Aorta (tissue), 5 donors: ENCODE measurements at regions of chr1 and their contacts with region 1.

Region 1: GRCh38 chr1:234533975-234534876 is 55.2 kb upstream of the TARBP1 start:
- DNase-seq: peak; percentile 94 to 97
- ATAC-seq: peak; percentile 21
- H3K4me3 ChIP-seq: no peak overlapping the region
- H3K27ac ChIP-seq: peak overlapping the region; percentile 97 to 99
- H3K4me1 ChIP-seq: peaks cover 3 to 18% of the 10 kb centered on the region in 2 donors
- H3K27me3 ChIP-seq: no peaks in the 10 kb centered on the region

Region 2: GRCh38 chr1:234235434-234235881 is 298.8 kb before region 1 on chr1:
- intact Hi-C with region 1: no loop called
- DNase-seq: no peak
- ATAC-seq: no peak
- H3K4me3 ChIP-seq: no peak overlapping the region
- H3K27ac ChIP-seq: no peak overlapping the region
- H3K4me1 ChIP-seq: no peaks in the 10 kb centered on the region
- H3K27me3 ChIP-seq: peaks cover 0 to 1% of the 10 kb centered on the region in 2 donors

Region 3: DNA sequence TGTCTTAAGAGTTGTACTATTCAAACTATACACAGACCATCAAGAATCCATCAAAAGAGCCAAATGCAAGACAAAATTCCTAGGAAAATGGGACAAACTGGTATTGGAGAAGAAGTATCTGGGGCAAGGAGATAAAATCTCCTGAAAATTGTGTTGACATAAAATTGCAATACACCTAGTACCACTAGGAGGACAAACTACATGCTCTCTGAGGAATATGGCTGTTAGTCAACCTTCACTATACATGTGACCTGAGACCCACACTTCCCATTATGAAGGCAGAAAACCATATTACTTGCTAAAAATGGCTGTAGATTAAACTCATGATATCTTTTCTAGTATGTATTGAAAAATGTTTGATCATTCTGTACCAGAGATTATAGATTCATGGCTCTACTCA is 45.7 kb after region 1 on chr1:
- intact Hi-C with region 1: loop called (anchors 2 to 5 kb)
- DNase-seq: no peak
- ATAC-seq: no peak
- H3K4me3 ChIP-seq: no peak overlapping the region
- H3K27ac ChIP-seq: no peak overlapping the region
- H3K4me1 ChIP-seq: peaks cover 0 to 4% of the 10 kb centered on the region in 2 donors
- H3K27me3 ChIP-seq: no peaks in the 10 kb centered on the region